ENCODE measurements at regions of chr19 and their contacts with region 1.

Region 1: GRCh38 chr19:35114353-35115176 is 1.1 kb upstream of the FXYD3 start:
- DNase-seq: peak; percentile 74 to 95
- ATAC-seq: peak; percentile 45 to 86
- H3K4me3 ChIP-seq: peak overlapping the region; percentile 6; the same call in 2 of the 3 replicates
- H3K27ac ChIP-seq: peak overlapping the region; percentile 19 to 36; a peak in 3 of 6 replicates
- H3K4me1 ChIP-seq: peaks cover 13% of the 10 kb centered on the region; the same call in 1 of the 3 replicates
- CTCF ChIP-seq: peak; percentile 98
- EP300 ChIP-seq: no peak
- POLR2A ChIP-seq: no peak
- RAD21 ChIP-seq: peak; percentile 80

Region 2: GRCh38 chr19:35055715-35056179 is 58.8 kb before region 1 on chr19:
- CTCF ChIA-PET with region 1: interaction called, 27 read pairs
- POLR2A ChIA-PET with region 1: no interaction called
- DNase-seq: peak in 1 of 2 experiments; percentile 51
- ATAC-seq: peak; percentile 78 to 86
- H3K4me3 ChIP-seq: no peak overlapping the region
- H3K27ac ChIP-seq: no peak overlapping the region
- H3K4me1 ChIP-seq: peaks cover 7% of the 10 kb centered on the region; the same call in 1 of the 3 replicates
- CTCF ChIP-seq: peak; percentile 45
- EP300 ChIP-seq: no peak
- POLR2A ChIP-seq: no peak
- RAD21 ChIP-seq: peak; percentile 45 to 51; a peak in 3 of 5 replicates

Region 3: DNA sequence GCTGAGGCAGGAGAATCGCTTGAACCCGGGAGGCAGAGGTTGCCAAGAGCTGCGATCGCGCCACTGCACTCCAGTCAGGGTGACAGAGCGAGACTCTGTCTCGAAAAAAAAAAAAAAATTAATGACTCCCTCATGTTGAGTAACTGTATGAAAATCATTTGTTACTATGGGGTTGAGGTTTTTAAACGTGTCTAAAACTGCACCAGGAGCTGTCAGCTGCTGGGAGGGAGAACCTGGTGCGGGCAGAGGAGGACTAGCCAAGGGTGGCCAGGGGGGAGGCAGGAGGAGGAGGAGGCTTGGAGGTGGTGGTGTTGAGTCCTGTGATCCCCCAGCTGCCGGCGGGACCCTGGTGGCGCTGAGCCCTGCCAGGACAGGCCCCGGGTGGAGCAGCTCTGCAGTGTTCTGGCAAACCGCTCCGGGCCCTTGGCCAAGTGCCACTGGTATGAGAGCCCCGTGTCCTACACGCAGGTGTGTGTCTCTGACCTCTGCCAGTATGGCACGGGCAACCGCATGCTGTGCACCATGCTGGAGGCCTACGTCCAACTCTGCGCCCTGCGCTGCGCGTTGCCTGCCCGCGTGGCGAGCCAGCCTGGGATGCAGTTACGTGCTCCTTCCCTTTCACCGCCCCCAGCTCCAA is 16.0 kb before region 1 on chr19:
- CTCF ChIA-PET with region 1: interaction called, 67 read pairs
- POLR2A ChIA-PET with region 1: no interaction called
- DNase-seq: no peak
- ATAC-seq: peak; percentile 22 to 37; a peak in 4 of 6 replicates
- H3K4me3 ChIP-seq: no peak overlapping the region
- H3K27ac ChIP-seq: no peak overlapping the region
- H3K4me1 ChIP-seq: no peaks in the 10 kb centered on the region
- CTCF ChIP-seq: no peak
- EP300 ChIP-seq: no peak
- POLR2A ChIP-seq: no peak
- RAD21 ChIP-seq: no peak

Region 4: GRCh38 chr19:35149463-35149862 is 34.9 kb after region 1 on chr19:
- CTCF ChIA-PET with region 1: interaction called, 11 read pairs
- POLR2A ChIA-PET with region 1: no interaction called
- DNase-seq: no peak
- ATAC-seq: no peak
- H3K4me3 ChIP-seq: no peak overlapping the region
- H3K27ac ChIP-seq: no peak overlapping the region
- H3K4me1 ChIP-seq: peaks cover 14% of the 10 kb centered on the region
- CTCF ChIP-seq: no peak
- EP300 ChIP-seq: no peak
- POLR2A ChIP-seq: no peak
- RAD21 ChIP-seq: no peak

Measured in A549 (cell line).